Caco-2 (cell line): ENCODE measurements at regions of chr3 and their contacts with region 1.

Region 1: DNA sequence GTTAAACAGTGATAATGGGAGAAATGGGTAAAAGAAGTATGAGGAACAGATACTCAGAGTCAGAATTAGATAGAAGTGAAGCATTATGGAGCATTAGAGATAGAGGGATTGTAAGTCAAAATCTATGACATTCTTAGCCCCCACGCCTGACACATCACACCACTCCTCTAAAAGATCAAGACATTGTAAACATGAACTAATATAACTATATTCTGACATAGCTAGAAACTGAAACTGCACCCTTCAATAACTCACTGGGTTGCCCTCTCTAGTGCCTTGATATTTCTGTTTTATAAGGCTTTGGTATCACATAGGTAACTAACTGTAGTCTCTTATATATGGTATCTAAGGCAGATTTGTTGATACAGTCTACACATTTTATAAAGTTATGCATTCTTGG is 684.3 kb upstream of the DPPA4 start:
- DNase-seq: no peak
- H3K4me3 ChIP-seq: no peak overlapping the region
- H3K4me3 Mint-ChIP-seq: no peak overlapping the region
- H3K27ac Mint-ChIP-seq: no peak overlapping the region
- H3K4me1 ChIP-seq: no peaks in the 10 kb centered on the region
- H3K4me1 Mint-ChIP-seq: no peaks in the 10 kb centered on the region
- H3K27me3 ChIP-seq: no peaks in the 10 kb centered on the region
- H3K27me3 Mint-ChIP-seq: no peaks in the 10 kb centered on the region
- CTCF ChIP-seq: no peak

Region 2: GRCh38 chr3:110066206-110066605 is 44.5 kb after region 1 on chr3:
- CTCF ChIA-PET with region 1: no interaction called
- POLR2A ChIA-PET with region 1: no interaction called
- intact Hi-C with region 1: loop called (anchors 1 kb)
- DNase-seq: no peak
- H3K4me3 ChIP-seq: no peak overlapping the region
- H3K4me3 Mint-ChIP-seq: no peak overlapping the region
- H3K27ac Mint-ChIP-seq: no peak overlapping the region
- H3K4me1 ChIP-seq: no peaks in the 10 kb centered on the region
- H3K4me1 Mint-ChIP-seq: no peaks in the 10 kb centered on the region
- H3K27me3 ChIP-seq: no peaks in the 10 kb centered on the region
- H3K27me3 Mint-ChIP-seq: no peaks in the 10 kb centered on the region
- CTCF ChIP-seq: no peak